ENCODE measurements at regions of chr6 and their contacts with region 1.

Region 1: GRCh38 chr6:37723016-37723415 is 25.3 kb upstream of the MDGA1 start:
- DNase-seq: no peak
- H3K4me3 ChIP-seq: no peak overlapping the region
- H3K27ac ChIP-seq: no peak overlapping the region
- H3K4me1 ChIP-seq: no peaks in the 10 kb centered on the region
- H3K27me3 ChIP-seq: no peaks in the 10 kb centered on the region
- CTCF ChIP-seq: no peak
- POLR2A ChIP-seq: no peak

Region 2: DNA sequence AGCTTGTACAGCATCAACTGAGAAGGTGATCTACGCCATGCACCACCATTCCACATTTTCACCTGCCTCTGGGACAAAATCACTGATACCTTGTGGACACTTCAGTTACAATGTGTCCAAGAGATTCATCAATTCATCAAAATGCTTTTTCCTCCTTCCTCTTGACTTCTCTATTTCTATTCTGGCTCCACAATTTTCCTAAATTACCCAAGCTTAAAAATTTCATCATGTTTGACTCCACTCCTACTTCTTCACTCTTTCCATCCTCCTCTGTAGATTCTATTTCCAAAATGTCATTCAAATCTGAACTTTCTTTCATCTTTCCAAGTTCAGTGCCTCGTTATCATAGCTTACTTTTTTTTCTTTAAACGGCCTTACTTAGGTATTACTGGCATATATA is 744.5 kb after region 1 on chr6:
- intact Hi-C with region 1: loop called (anchors 5 kb)
- DNase-seq: no peak
- H3K4me3 ChIP-seq: no peak overlapping the region
- H3K27ac ChIP-seq: no peak overlapping the region
- H3K4me1 ChIP-seq: no peaks in the 10 kb centered on the region
- H3K27me3 ChIP-seq: no peaks in the 10 kb centered on the region
- CTCF ChIP-seq: no peak
- POLR2A ChIP-seq: no peak

Measured in vagina (tissue), 2 donors.